ENCODE measurements at regions of chr5 and their contacts with region 1.

Region 1: GRCh38 chr5:142012792-142013388 is at the start of gene GNPDA1:
- DNase-seq: peak; percentile 95
- H3K27ac ChIP-seq: peak within 1 kb of the TSS; percentile 77
- CTCF ChIP-seq: peak; percentile 25

Region 2: GRCh38 chr5:142053426-142054151 is 40.7 kb after region 1 on chr5:
- CTCF ChIA-PET with region 1: no interaction called
- POLR2A ChIA-PET with region 1: no interaction called
- DNase-seq: no peak
- H3K27ac ChIP-seq: no peak overlapping the region
- CTCF ChIP-seq: no peak

Region 3: GRCh38 chr5:142143878-142144277 is 131.0 kb after region 1 on chr5:
- CTCF ChIA-PET with region 1: interaction called, 18 read pairs
- POLR2A ChIA-PET with region 1: interaction called, 3 read pairs
- DNase-seq: peak; percentile 67
- H3K27ac ChIP-seq: no peak overlapping the region
- CTCF ChIP-seq: peak; percentile 64

Measured in RWPE1 (cell line).